Posterior cingulate gyrus (tissue), 11 donors: ENCODE measurements at regions of chr10 and their contacts with region 1.

Region 1: DNA sequence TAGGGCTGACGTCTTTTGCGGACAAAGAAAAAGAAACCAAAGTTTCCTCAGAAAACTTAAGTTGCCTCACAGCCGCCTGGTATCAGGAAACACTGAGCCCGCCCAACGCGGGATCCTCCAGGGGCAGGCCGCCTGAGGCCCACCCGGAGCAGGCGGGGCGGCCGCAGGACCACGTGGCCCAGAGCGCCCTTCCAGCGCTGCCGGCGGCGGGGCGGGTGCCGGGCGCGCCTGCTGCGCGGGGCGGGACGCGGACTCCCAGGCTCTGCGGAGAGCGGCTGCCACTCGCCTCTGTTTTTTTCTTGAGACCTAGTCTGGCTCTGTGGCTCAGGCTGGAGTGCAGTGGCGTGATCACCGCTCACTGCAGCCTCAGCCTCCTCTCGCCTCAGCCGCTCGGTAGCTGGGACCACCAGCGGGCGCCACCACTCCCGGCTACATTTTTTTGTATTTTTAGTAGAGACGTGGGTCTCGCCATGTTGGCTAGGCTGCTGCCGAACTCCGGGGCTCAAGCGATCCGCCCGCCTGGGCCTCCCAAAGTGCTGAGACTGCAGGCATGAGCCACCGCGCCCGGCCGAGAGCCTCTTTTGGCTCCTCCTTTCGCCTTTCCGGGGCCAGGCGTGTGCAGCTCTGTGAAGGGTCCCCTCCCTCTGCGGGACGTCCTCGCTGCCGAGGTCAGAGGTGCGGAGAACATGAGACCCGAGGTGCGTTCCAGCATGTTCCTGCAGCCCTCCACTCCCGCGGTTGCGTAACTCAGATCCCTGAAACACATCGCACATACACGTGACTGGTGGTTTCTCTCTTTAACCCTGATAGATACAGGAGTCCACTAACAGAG is 11.6 kb upstream of the HNRNPF start:
- DNase-seq: peak; percentile 72 to 98 (median 82)

Region 2: GRCh38 chr10:43408710-43409384 is 11.7 kb before region 1 on chr10 and contains the start of gene HNRNPF:
- intact Hi-C with region 1: loop called (anchors 1 kb)
- DNase-seq: peak; percentile 84 to 99 (median 94)

Region 3: GRCh38 chr10:43444313-43444712 is 23.7 kb after region 1 on chr10:
- intact Hi-C with region 1: no loop called
- DNase-seq: no peak